HEK293 (cell line): ENCODE measurements at regions of chr15 and their contacts with region 1.

Region 1: GRCh38 chr15:90086868-90087268 is 15.4 kb downstream of the IDH2 start:
- H3K4me3 ChIP-seq: no peak overlapping the region
- H3K27ac ChIP-seq: no peak overlapping the region
- H3K4me1 ChIP-seq: no peaks in the 10 kb centered on the region
- CTCF ChIP-seq: peak; percentile 32; the same call in 1 of the 2 replicates

Region 2: GRCh38 chr15:90101969-90102890 is 15.4 kb after region 1 on chr15 and contains the start of gene IDH2:
- CTCF ChIA-PET with region 1: interaction called, 23 read pairs
- POLR2A ChIA-PET with region 1: interaction called, 3 read pairs
- H3K4me3 ChIP-seq: peak within 1 kb of the TSS; percentile 71
- H3K27ac ChIP-seq: peak within 1 kb of the TSS; percentile 92; the same call in 1 of the 2 replicates
- H3K4me1 ChIP-seq: peaks cover 9% of the 10 kb centered on the region
- CTCF ChIP-seq: no peak